ENCODE measurements at regions of chr1 and their contacts with region 1.

Region 1: DNA sequence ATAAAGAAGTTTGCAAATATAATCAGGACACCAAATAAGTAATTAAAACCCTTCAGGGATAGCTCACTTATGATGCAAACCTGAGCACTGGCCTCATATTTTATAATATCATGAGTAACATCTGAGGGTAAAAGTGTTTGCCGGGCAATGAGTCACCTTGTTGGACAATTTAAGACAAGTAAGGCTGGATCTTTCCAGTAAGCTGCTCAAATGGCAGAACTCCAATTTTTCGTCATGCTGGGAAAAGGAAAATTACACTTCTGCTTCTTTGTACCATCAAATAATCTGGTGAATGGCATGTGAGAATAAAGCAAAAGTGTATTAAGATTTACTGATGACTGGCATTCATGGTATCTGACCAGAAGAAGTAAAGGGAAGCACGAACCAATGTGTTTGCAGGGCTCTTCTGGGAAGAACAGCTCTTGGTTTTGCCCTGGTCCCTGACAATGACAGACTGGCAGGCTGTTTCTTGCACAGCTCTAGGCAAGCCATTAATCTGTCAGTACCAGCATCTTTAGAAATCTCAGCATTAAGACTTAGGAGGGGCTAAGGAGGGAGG is 392.2 kb downstream of the VAV3 start:
- DNase-seq: no peak
- ATAC-seq: no peak

Region 2: GRCh38 chr1:107649023-107649422 is 76.3 kb after region 1 on chr1:
- intact Hi-C with region 1: no loop called
- DNase-seq: no peak
- ATAC-seq: no peak

Region 3: GRCh38 chr1:107870696-107871095 is 298.0 kb after region 1 on chr1:
- intact Hi-C with region 1: loop called (anchors 5 kb)
- DNase-seq: no peak
- ATAC-seq: no peak

Measured in sciatic nerve (tissue), 2 donors.